Activated T-helper 1 cell treated with anti-CD3 and anti-CD28 coated beads, Interleukin-12 subunit alpha, Interleukin-12 subunit beta, Interleukin-2, Interleukin-4 antibody, amounts not matched to agents 30 ng/mL and 10 ng/mL and 1 ng/mL, durations not matched to agents 14 hours and 24 hours and 36 hours (primary cell): ENCODE measurements at regions of chr5 and their contacts with region 1.

Region 1: GRCh38 chr5:112968411-112969106 is 8.0 kb upstream of the DCP2 start:
- DNase-seq: no peak
- H3K4me3 Mint-ChIP-seq: no peak overlapping the region
- H3K27ac Mint-ChIP-seq: no peak overlapping the region
- H3K4me1 Mint-ChIP-seq: peaks cover 33% of the 10 kb centered on the region
- H3K27me3 Mint-ChIP-seq: no peaks in the 10 kb centered on the region

Region 2: GRCh38 chr5:112551419-112552032 is 417.0 kb before region 1 on chr5:
- intact Hi-C with region 1: loop called (anchors 1 kb)
- DNase-seq: peak; percentile 14
- H3K4me3 Mint-ChIP-seq: no peak overlapping the region
- H3K27ac Mint-ChIP-seq: no peak overlapping the region
- H3K4me1 Mint-ChIP-seq: no peaks in the 10 kb centered on the region
- H3K27me3 Mint-ChIP-seq: peaks cover 15% of the 10 kb centered on the region

Region 3: DNA sequence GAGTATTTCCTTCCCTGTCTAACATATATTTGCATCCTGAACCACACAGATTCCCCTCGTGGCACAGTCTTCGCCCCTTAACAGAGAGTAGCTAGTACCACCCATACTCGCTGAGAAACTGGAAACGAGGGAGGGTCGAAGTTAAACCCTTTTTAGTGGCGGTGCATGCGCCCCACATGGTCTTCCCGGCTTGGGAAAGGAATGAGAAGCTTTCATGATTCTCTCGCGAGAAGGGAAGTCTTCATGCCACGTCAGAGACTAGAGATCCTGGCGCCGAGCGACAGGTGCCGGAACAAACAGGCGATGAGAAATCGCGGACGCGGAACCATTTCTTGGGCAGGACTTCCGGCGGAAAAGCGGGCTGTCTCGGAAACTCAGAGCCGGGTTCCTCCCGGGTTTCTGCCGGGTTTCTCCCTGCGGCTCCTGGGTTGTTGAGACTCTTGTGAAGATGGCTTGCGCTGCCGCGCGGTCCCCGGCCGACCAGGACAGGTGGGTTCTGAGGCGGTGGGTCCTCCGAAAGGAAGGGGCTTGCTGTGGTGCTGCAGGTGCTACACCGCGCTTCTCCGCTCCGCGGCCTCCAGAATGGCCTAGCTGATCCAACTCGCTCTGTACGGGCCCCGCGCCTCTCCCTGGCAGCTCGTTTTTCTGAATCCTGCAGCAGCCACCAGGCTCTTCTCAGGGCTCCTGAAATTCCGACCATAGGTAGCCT is 107.5 kb before region 1 on chr5 and contains the start of gene SRP19:
- intact Hi-C with region 1: loop called (anchors 1 kb)
- DNase-seq: peak; percentile 89
- H3K4me3 Mint-ChIP-seq: peak within 1 kb of the TSS; percentile 97
- H3K27ac Mint-ChIP-seq: peak within 1 kb of the TSS; percentile 96
- H3K4me1 Mint-ChIP-seq: peaks cover 27% of the 10 kb centered on the region
- H3K27me3 Mint-ChIP-seq: peaks cover 12% of the 10 kb centered on the region
- total RNA-seq, gene SRP19: 72.0 and 72.5 TPM in 2 replicates

Region 4: GRCh38 chr5:112878760-112879159 is 89.8 kb before region 1 on chr5:
- intact Hi-C with region 1: loop called (anchors 2 kb)
- DNase-seq: peak; percentile 62
- H3K4me3 Mint-ChIP-seq: peak overlapping the region; percentile 31
- H3K27ac Mint-ChIP-seq: peak overlapping the region; percentile 54
- H3K4me1 Mint-ChIP-seq: peaks cover 42% of the 10 kb centered on the region
- H3K27me3 Mint-ChIP-seq: no peaks in the 10 kb centered on the region

Region 5: GRCh38 chr5:113022661-113023060 is 54.1 kb after region 1 on chr5:
- intact Hi-C with region 1: loop called (anchors 1 kb)
- DNase-seq: peak; percentile 27
- H3K4me3 Mint-ChIP-seq: peak overlapping the region; percentile 43
- H3K27ac Mint-ChIP-seq: peak overlapping the region; percentile 61
- H3K4me1 Mint-ChIP-seq: peaks cover 62% of the 10 kb centered on the region
- H3K27me3 Mint-ChIP-seq: no peaks in the 10 kb centered on the region